AG04449 (cell line): ENCODE measurements at regions of chr12 and their contacts with region 1.

Region 1: DNA sequence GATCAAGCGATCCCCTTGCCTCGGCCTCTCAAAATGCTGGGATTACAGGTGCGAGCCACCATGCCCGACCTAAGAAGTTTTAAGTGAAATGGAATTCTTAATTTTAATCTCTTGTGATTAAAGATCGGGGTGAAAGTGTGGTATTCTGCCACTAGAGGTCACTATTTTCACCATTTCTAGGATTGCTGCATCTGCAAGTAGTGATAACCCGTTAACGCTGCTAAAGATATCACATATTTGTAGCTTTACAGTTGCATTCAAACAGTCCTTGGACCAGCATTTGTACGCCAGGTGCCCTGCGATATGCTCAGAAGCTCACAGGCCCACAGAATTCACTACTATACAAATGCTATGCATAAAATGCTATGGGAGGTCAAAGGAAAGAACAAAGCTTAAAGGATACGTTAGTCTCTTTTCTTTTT is 19.3 kb downstream of the CCDC62 start:
- DNase-seq: no peak
- H3K4me3 ChIP-seq: no peak overlapping the region
- CTCF ChIP-seq: peak; percentile 34

Region 2: GRCh38 chr12:122148657-122149056 is 645.0 kb before region 1 on chr12:
- CTCF ChIA-PET with region 1: no interaction called
- POLR2A ChIA-PET with region 1: no interaction called
- DNase-seq: no peak
- H3K4me3 ChIP-seq: no peak overlapping the region
- CTCF ChIP-seq: no peak

Region 3: DNA sequence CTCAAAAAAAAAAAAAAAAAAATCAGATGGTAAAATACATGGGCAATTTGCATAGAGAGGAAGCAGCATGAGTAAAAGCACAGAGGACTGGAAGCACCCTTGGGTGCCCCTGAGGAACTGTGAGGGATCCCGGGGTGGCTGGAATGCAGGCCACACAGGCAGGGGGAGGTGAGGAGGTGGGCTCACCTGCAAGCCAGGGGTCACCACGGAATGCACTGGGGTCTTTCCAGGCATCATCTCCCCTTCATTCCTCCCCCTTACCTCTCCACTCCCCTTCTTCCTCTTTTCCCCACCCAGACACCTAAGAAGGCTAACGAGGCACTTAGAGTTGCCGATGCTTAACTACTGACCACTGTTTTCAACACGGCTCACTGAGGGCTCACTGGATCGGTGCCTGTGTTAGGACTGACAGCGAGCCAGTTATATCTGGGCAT is 27.2 kb after region 1 on chr12:
- CTCF ChIA-PET with region 1: interaction called, 30 read pairs
- POLR2A ChIA-PET with region 1: interaction called, 3 read pairs
- DNase-seq: no peak
- H3K4me3 ChIP-seq: no peak overlapping the region
- CTCF ChIP-seq: no peak

Region 4: GRCh38 chr12:122834104-122834920 is 40.6 kb after region 1 on chr12:
- CTCF ChIA-PET with region 1: interaction called, 20 read pairs
- POLR2A ChIA-PET with region 1: no interaction called
- DNase-seq: no peak
- H3K4me3 ChIP-seq: peak overlapping the region; percentile 63
- CTCF ChIP-seq: no peak

Region 5: DNA sequence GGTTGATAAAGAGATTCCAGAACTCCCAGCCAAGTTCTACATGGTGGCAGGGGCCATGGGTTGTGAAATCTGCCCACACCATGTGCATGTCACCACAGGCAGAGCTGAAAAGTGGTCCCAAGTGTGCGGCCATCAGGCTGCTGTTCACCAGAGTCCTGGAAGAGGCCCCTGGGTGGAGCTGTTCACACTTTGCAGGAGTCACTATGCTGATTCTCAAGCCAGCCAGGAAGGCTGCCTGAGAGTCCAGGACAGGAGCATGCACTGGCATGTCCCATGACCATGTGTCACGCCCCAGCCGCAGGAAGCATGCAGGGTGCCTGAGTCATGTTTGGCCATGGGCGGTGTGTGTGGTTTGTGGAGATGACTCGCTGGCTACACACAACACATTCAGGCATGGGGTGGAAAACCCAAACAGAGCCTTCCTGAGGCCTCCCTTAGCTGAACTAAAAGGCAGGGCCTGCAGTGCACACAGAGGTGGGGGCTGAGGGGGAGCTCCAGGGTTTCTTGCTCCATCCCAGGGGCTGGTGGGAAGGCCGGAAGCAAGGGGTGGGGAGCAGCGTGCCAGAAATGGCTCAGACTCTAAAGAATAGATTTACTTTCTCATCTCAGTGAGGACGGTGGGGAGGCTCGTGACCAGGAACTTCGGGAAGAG is 153.1 kb after region 1 on chr12:
- CTCF ChIA-PET with region 1: interaction called, 54 read pairs
- POLR2A ChIA-PET with region 1: no interaction called
- DNase-seq: peak; percentile 97
- H3K4me3 ChIP-seq: no peak overlapping the region
- CTCF ChIP-seq: peak; percentile 49

Region 6: DNA sequence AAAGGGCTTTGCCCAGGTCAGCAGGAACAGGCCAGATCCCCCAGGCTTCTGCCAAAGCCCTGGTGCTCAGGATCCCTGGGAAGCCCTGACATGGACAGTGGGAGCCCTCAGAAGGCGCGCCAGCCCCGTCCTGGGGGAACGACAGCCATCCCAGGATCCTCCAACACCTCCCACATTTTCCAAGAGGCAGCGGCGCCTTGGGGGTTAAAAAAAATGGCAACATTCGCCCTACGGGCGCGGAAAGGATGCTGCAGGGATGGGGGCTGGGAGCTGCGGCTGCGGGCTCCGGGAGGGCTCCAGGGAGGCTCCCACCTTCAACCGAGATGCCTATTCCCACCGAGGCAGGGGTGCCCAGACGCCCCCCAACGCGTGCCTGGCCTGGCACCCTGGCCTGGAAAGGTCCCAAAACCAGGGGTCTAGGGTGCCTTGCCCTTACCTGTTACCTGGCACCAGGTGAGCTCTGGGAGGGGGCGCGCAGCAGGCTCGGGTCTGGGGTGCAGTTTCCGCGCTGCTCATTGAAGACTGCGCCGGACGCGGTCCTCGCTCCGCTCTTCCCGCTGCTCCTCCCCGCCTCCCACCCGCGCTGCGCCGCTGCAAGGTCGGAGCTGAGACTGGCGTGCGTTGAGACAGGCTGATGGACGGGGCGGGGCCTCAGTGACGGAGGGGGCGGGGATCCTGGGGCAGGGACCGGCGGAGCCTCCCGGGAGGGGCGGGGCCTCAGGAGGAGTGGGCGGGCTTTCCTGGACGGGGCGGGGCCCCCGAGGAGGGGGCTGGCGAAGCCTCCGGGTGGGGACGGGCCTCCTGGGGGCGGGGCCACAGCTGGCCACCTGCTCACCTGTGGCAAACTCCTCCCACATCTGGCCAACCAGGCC is 172.4 kb after region 1 on chr12 and contains the start of gene ABCB9:
- CTCF ChIA-PET with region 1: interaction called, 14 read pairs
- POLR2A ChIA-PET with region 1: no interaction called
- DNase-seq: no peak
- H3K4me3 ChIP-seq: peak within 1 kb of the TSS; percentile 88
- CTCF ChIP-seq: peak; percentile 12

Region 7: DNA sequence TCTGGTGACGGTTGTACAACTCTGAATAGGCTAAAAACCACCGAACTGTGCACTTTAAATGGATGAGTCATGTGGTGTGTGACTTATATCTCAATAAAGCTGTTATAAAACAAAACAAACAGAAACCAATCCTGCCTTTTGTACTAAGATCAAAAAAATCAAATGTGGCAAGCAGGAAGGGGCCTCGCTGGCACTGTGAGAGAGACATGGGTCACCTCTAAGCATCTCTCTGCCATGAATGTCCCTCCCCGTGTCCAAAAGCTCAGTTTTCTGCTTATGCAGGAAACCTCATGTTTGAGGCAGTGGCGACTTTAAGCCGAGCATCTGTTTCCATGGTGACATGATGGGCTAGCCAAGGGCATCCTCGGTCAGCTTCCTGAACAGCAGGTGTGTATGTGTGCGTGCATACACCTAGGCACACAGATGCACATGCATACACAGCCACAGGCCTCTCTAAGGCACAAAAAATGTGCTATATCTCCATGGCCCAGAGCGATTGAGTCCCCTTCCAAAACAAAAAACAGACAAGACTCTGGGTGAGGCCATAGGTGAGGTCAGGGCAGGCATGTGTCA is 231.2 kb after region 1 on chr12:
- CTCF ChIA-PET with region 1: no interaction called
- POLR2A ChIA-PET with region 1: no interaction called
- DNase-seq: no peak
- H3K4me3 ChIP-seq: no peak overlapping the region
- CTCF ChIP-seq: no peak